ENCODE measurements at regions of chr5 and their contacts with region 1.

Region 1: DNA sequence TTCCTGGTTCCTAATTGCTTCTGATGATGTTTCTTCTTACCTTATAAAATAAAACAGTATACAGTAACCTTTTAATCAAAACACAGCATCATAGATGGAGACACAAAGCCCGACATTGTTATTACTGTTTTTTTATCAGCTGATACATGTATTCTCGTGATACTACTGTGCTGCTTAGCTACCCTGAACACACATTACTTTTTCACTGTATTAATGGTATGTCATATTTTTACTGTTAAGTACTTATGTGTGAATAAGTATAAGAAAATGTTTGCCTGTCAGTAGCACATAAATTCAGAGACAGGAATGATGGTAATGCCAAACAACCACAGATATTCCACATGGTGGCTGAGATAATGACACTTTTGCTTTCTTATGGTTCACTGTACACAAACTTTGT is 68.7 kb downstream of the RAB24 start:
- DNase-seq: no peak
- ATAC-seq: no peak
- H3K4me3 ChIP-seq: no peak overlapping the region
- H3K27ac ChIP-seq: no peak overlapping the region
- H3K4me1 ChIP-seq: peaks cover 9 to 20% of the 10 kb centered on the region in 2 experiments
- H3K27me3 ChIP-seq: no peaks in the 10 kb centered on the region
- CTCF ChIP-seq: no peak
- POLR2A ChIP-seq: no peak
- RAD21 ChIP-seq: no peak

Region 2: GRCh38 chr5:177271113-177271512 is 36.3 kb after region 1 on chr5:
- CTCF ChIA-PET with region 1: no interaction called
- POLR2A ChIA-PET with region 1: no interaction called
- RAD21 ChIA-PET with region 1: no interaction called
- intact Hi-C with region 1: loop called (anchors 5 kb)
- DNase-seq: no peak
- ATAC-seq: no peak
- H3K4me3 ChIP-seq: no peak overlapping the region
- H3K27ac ChIP-seq: no peak overlapping the region
- H3K4me1 ChIP-seq: no peaks in the 10 kb centered on the region
- H3K27me3 ChIP-seq: no peaks in the 10 kb centered on the region
- CTCF ChIP-seq: no peak
- POLR2A ChIP-seq: no peak
- RAD21 ChIP-seq: no peak

Region 3: DNA sequence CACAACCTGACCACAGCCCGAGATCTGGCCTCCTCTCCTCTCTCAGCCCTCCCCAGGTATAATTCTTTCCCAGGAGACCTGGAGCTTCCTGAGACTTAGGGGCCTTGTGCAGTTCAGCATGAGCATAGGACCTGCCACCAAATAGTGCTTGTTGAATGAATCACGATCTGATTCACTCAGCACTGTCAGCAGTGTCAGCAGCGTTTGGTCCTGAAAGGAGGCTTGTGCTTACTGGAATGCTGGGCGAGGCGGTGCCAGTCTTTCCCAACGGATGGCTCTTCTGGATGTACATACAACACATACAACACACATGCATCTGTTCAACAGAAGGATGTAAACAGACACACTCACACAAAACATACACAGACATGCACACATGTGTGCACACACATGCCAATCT is 1182.1 kb after region 1 on chr5:
- CTCF ChIA-PET with region 1: no interaction called
- POLR2A ChIA-PET with region 1: no interaction called
- RAD21 ChIA-PET with region 1: no interaction called
- intact Hi-C with region 1: no loop called
- DNase-seq: no peak
- ATAC-seq: no peak
- H3K4me3 ChIP-seq: no peak overlapping the region
- H3K27ac ChIP-seq: no peak overlapping the region
- H3K4me1 ChIP-seq: no peaks in the 10 kb centered on the region
- H3K27me3 ChIP-seq: peaks cover 15% of the 10 kb centered on the region; the same call in 1 of the 2 replicates
- CTCF ChIP-seq: no peak
- POLR2A ChIP-seq: no peak
- RAD21 ChIP-seq: no peak

Measured in HCT116 (cell line).